ENCODE measurements at regions of chr5 and their contacts with region 1.

Region 1: DNA sequence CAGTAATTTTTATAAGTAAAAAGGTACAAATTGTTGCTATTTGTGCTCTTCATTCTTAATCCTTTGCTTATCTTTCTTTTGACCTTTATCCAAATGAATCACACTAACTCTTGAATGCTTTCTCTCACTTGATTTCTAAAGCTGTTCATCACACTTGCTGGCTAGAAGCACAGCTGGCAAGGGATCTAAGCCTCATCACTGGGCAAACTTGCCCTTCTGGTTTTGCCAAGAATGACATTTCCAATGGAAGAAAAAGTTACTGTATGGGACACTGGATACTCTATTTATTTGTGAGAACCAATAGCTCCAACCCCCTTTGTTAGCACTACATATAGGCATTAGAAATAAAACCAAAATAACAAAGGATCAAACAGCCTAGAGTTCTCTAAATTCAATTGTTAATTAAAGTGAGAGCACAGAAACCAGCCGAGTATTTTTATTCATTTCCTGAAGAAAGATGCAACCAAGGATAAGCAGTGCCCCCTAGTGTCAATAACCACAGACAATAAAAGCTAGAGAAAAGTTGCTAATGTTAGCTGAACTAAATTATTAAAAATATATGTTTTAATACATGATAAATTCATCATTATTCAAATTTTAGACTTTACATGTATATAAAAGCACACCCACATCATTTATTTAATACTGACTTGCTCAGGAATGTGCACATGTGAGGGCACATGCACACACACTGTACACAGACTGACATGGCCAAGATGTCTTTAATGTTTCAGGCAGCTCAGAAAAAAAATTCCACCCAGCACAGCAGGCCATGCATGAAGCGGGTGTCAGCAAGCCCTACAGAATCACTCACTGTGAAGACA is 59.8 kb upstream of the POU5F2 start:
- DNase-seq: peak; percentile 26
- H3K4me3 ChIP-seq: 0 out of 4 replicates have a peak overlapping the region, but pooled peaks of 1 of the 2 experiments have one; percentile 3
- H3K27ac ChIP-seq: peak overlapping the region in 1 of 2 experiments; percentile 12; a peak in 2 of 4 replicates
- H3K4me1 ChIP-seq: peaks cover 0 to 6% of the 10 kb centered on the region in 2 experiments; a peak in 2 of 4 replicates
- H3K27me3 ChIP-seq: no peaks in the 10 kb centered on the region
- CTCF ChIP-seq: peak; percentile 79
- EP300 ChIP-seq: no peak
- RAD21 ChIP-seq: peak; percentile 86

Region 2: DNA sequence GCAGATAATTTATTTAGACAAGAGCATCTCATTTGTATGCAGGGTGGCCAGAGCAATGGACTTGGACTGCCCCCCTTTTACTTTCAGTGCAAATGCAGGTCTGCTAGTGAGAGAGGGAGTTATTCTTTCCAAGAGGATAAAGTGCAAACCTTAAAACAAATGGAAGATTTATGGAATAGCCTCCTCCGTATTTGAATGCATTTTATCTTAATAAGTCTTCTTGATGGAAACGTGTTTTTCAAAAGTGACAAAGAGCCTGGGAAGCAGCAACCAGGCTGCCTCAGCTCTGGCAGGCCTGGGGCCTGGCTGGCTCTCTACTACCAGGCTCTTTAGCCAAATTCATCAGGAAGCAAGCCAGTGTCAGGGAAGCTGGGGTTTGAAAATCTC is 211.4 kb before region 1 on chr5:
- CTCF ChIA-PET with region 1: interaction called, 16 read pairs
- POLR2A ChIA-PET with region 1: no interaction called
- DNase-seq: peak; percentile 59
- H3K4me3 ChIP-seq: peak overlapping the region in 1 of 2 experiments; percentile 34; a peak in 1 of 4 replicates
- H3K27ac ChIP-seq: peak overlapping the region; percentile 27 to 67; a peak in 3 of 4 replicates
- H3K4me1 ChIP-seq: peaks cover 0 to 24% of the 10 kb centered on the region in 2 experiments; a peak in 3 of 4 replicates
- H3K27me3 ChIP-seq: no peaks in the 10 kb centered on the region
- CTCF ChIP-seq: peak; percentile 25
- EP300 ChIP-seq: no peak
- RAD21 ChIP-seq: peak; percentile 41; the same call in 1 of the 2 replicates

Region 3: DNA sequence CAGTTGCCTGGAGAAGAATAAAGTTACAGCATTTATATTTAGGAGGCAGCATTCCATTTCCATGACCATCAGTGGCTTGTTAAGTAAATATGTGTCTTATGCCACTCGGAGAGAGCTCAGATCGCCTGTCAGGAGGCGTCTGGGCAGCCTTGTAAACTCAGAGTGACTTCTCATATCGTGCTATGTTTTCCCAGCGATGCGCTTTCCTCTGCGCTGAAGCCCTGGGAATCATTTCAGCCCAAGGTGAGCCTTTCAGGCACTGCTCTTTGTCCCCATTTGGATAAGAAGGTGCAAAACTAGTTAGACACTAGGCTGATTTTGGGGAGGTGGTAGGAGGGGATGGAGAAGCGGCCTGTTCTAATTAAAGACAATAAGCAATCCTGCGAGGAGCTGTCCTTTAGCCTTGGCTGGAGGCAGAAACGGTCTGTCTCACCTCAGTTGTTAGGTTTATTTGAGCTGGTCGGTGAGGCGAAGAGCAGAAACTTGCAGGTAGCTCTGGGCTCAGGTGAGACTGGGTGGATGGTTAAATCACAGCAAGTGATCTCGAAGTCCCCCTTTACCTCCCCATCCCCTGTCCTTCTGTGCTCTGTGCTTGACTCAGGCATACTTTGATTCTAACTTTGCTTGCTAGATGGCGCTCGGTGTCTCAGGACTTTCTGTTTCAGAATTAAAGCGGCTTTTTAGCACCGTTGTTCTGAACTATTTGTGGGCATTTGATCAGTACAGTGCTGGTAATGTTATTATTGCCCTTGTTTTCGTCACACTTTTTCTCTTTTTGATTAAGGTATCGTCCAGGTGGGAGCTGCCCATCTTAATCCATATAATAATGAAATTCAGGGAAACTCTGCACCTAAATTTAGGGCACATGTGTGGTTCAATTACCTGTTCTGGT is 193.6 kb before region 1 on chr5:
- CTCF ChIA-PET with region 1: interaction called, 43 read pairs
- POLR2A ChIA-PET with region 1: interaction called, 3 read pairs
- DNase-seq: peak; percentile 64
- H3K4me3 ChIP-seq: peak overlapping the region in 1 of 2 experiments; percentile 26; a peak in 2 of 4 replicates
- H3K27ac ChIP-seq: peak overlapping the region in 1 of 2 experiments; percentile 48; a peak in 2 of 4 replicates
- H3K4me1 ChIP-seq: peaks cover 0 to 14% of the 10 kb centered on the region in 2 experiments; a peak in 3 of 4 replicates
- H3K27me3 ChIP-seq: peaks cover 6% of the 10 kb centered on the region
- CTCF ChIP-seq: peak; percentile 71
- EP300 ChIP-seq: no peak
- RAD21 ChIP-seq: peak; percentile 85

Region 4: DNA sequence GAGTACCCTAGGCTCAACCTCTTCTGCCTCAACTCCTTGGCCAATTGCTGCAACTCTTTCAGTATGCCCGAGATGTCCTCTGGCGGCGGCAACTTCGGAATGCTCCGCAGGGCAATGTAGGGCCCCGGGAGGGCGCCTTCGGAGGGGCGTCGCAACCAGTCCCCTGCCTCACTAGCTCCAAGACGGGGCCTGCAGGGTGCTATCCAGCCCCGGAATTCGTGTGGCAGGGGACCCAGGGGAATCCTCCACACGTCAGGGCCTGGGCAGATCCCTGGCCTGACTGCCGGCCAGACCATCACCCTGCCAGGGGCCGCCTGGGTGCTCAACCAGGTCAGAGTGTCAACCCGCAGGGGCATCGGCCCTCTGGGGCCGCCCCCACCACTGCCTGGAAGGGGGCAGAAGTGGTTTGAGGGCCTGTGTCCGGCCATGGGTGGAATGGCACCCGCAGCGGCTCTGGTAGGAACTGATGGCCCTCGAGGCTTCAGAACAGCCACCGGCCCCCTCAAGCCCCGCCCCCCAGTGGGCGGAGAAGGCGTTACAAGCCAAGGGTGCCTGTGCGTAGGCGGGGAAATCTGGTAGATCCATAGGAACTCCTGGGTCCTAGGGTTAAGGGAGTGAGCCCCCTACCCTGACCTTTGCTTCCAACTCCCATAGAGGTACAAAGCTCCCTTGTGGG is 59.9 kb before region 1 on chr5 and contains the start of gene POU5F2:
- CTCF ChIA-PET with region 1: no interaction called
- POLR2A ChIA-PET with region 1: no interaction called
- DNase-seq: peak; percentile 18
- H3K4me3 ChIP-seq: no peak within 1 kb of the TSS
- H3K27ac ChIP-seq: no peak within 1 kb of the TSS
- H3K4me1 ChIP-seq: peaks cover 0 to 7% of the 10 kb centered on the region in 2 experiments; a peak in 2 of 4 replicates
- H3K27me3 ChIP-seq: no peaks in the 10 kb centered on the region
- CTCF ChIP-seq: 0 out of 2 replicates have a peak, but pooled peaks have one; percentile 10
- EP300 ChIP-seq: no peak
- RAD21 ChIP-seq: no peak
- polyA plus RNA-seq, gene POU5F2: 0.02 TPM in 2 replicates

Region 5: GRCh38 chr5:93789173-93790070 is 11.8 kb before region 1 on chr5:
- CTCF ChIA-PET with region 1: interaction called, 27 read pairs
- POLR2A ChIA-PET with region 1: no interaction called
- DNase-seq: no peak
- H3K4me3 ChIP-seq: no peak overlapping the region
- H3K27ac ChIP-seq: peak overlapping the region; percentile 11 to 16; a peak in 2 of 4 replicates
- H3K4me1 ChIP-seq: peaks cover 3 to 7% of the 10 kb centered on the region in 2 experiments; a peak in 2 of 4 replicates
- H3K27me3 ChIP-seq: no peaks in the 10 kb centered on the region
- CTCF ChIP-seq: peak; percentile 42; the same call in 1 of the 2 replicates
- EP300 ChIP-seq: peak in 1 of 2 experiments; percentile 23; a peak in 1 of 4 replicates
- RAD21 ChIP-seq: peak; percentile 33

Region 6: DNA sequence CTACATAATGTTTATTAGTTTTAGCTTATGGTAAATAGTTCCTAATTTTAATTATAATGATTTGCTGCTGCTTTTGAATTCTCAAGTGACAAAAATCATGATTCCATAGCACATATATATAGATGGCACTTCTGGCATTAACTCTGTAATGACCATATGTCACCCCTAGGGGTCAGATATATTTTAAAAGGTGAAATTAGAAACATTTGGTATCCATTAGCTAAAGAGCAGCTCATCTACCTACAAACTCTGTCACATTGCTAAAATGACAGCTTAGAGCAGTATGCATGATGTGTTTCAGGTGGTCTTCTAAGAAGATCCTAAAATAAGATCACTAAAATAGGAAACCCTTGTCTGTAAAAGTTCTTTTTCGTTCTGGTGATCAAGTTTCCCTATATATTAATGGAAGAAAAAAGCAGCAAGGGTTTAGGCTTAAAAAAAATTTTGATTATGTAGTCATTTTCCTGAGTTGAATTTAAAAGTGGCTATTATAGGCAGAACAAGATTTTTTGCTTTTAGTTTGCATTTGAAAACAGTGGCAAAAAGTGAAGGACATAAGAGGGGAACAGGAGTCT is 97.9 kb after region 1 on chr5:
- CTCF ChIA-PET with region 1: interaction called, 15 read pairs
- POLR2A ChIA-PET with region 1: no interaction called
- DNase-seq: peak; percentile 11
- H3K4me3 ChIP-seq: no peak overlapping the region
- H3K27ac ChIP-seq: no peak overlapping the region
- H3K4me1 ChIP-seq: peaks cover 0 to 4% of the 10 kb centered on the region in 2 experiments; a peak in 2 of 4 replicates
- H3K27me3 ChIP-seq: no peaks in the 10 kb centered on the region
- CTCF ChIP-seq: peak; percentile 65
- EP300 ChIP-seq: no peak; a peak in 1 of 4 replicates
- RAD21 ChIP-seq: peak; percentile 44